Activated naive CD4-positive, alpha-beta T cell treated with anti-CD3 and anti-CD28 coated beads, Interleukin-2, amount 10 ng/mL, durations not matched to agents 7 days and 5 days (primary cell): ENCODE measurements at regions of chr17 and their contacts with region 1.

Region 1: GRCh38 chr17:31216053-31216751 is 80.8 kb downstream of the OMG start:
- DNase-seq: no peak
- H3K4me3 Mint-ChIP-seq: no peak overlapping the region
- H3K27ac Mint-ChIP-seq: no peak overlapping the region
- H3K4me1 Mint-ChIP-seq: no peaks in the 10 kb centered on the region
- H3K27me3 Mint-ChIP-seq: no peaks in the 10 kb centered on the region

Region 2: DNA sequence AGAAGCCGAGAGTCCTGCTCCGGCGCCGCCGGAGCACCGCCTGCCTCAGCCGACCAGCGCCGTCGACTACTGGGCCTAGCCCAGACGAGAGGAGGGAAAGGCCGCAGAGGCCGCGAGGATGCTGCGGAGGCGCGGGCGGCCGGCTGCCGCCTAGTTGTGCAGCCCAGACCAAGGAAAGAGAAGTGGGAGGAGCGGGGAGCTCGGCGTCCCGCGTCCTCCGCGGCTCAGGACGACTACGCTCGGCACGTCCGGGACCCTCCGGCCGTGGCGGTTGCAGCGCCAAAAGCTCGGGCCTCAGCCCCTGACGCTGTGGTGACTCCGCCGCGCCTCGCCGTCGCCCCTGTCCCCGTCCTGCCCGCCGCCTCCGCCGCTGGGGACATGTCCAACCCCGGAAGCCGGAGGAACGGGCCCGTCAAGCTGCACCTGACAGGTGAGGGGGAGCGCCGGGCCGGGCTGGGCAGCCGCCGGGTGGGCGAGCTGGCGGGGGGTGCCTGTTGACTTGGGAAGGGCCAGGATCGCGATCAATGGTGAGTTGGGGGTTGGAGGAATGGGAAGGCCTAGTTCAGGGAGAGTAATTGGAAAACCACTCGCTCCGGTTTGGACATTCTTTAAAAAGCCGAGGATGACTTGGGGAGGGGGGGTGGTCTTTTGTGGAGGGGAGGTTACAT is 207.7 kb before region 1 on chr17:
- CTCF ChIA-PET with region 1: interaction called, 11 read pairs
- DNase-seq: peak; percentile 70
- H3K4me3 Mint-ChIP-seq: peak overlapping the region; percentile 76
- H3K27ac Mint-ChIP-seq: peak overlapping the region; percentile 62
- H3K4me1 Mint-ChIP-seq: peaks cover 16% of the 10 kb centered on the region
- H3K27me3 Mint-ChIP-seq: peaks cover 24% of the 10 kb centered on the region

Region 3: DNA sequence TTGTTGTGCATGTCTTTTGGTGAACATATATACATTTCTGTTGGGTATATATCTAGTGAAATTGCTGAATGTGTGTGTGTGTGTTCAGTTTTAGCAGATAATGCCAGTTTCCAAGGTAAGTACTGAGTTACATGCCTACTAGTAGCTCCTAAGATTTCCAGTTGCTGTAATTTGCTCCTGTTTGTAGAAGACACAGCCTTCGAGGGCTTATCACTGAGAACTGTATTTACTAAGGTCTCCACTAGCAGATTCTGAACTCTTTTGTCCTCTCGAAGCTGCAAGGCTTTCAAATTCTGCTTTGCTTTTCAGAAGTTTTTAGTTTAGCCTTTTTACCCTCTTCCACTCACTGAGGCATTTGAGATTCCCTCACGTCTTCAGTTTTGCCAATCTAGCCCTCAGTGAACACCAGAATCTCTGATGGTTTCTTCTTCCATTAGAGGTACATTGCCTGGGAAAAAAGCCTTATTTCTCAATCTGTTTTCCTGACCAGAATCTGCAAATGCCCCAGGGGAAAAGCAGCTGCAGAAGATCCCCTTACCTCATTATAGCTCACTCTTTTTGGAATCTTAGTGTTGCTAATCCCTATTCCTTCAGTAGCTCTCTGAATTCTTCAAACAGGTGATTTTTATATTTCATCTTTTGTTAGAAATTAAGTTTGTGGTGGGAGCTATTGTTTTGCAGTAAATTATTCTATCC is 68.5 kb before region 1 on chr17:
- CTCF ChIA-PET with region 1: no interaction called
- DNase-seq: no peak
- H3K4me3 Mint-ChIP-seq: no peak overlapping the region
- H3K27ac Mint-ChIP-seq: no peak overlapping the region
- H3K4me1 Mint-ChIP-seq: no peaks in the 10 kb centered on the region
- H3K27me3 Mint-ChIP-seq: no peaks in the 10 kb centered on the region

Region 4: GRCh38 chr17:31373150-31374093 is 157.2 kb after region 1 on chr17:
- CTCF ChIA-PET with region 1: interaction called, 25 read pairs
- DNase-seq: no peak
- H3K4me3 Mint-ChIP-seq: no peak overlapping the region
- H3K27ac Mint-ChIP-seq: no peak overlapping the region
- H3K4me1 Mint-ChIP-seq: peaks cover 19% of the 10 kb centered on the region
- H3K27me3 Mint-ChIP-seq: no peaks in the 10 kb centered on the region